ENCODE measurements at regions of chr22 and their contacts with region 1.

Region 1: GRCh38 chr22:36277482-36278291 is 24.8 kb downstream of the APOL1 start:
- DNase-seq: peak; percentile 84
- ATAC-seq: peak; percentile 79
- H3K4me3 Mint-ChIP-seq: no peak overlapping the region
- H3K27ac Mint-ChIP-seq: peak overlapping the region; percentile 69
- H3K4me1 Mint-ChIP-seq: peaks cover 35% of the 10 kb centered on the region
- H3K27me3 Mint-ChIP-seq: no peaks in the 10 kb centered on the region

Region 2: GRCh38 chr22:36123673-36124630 is 153.7 kb before region 1 on chr22:
- CTCF ChIA-PET with region 1: no interaction called
- DNase-seq: peak; percentile 95
- ATAC-seq: peak; percentile 99
- H3K4me3 Mint-ChIP-seq: peak overlapping the region; percentile 56
- H3K27ac Mint-ChIP-seq: peak overlapping the region; percentile 79
- H3K4me1 Mint-ChIP-seq: peaks cover 15% of the 10 kb centered on the region
- H3K27me3 Mint-ChIP-seq: peaks cover 2% of the 10 kb centered on the region

Region 3: GRCh38 chr22:36156515-36157419 is 120.9 kb before region 1 on chr22:
- CTCF ChIA-PET with region 1: no interaction called
- DNase-seq: peak; percentile 77
- ATAC-seq: peak; percentile 52
- H3K4me3 Mint-ChIP-seq: peak overlapping the region; percentile 98
- H3K27ac Mint-ChIP-seq: peak overlapping the region; percentile 93
- H3K4me1 Mint-ChIP-seq: peaks cover 83% of the 10 kb centered on the region
- H3K27me3 Mint-ChIP-seq: no peaks in the 10 kb centered on the region

Region 4: GRCh38 chr22:36194971-36195370 is 82.7 kb before region 1 on chr22:
- CTCF ChIA-PET with region 1: interaction called, 26 read pairs
- DNase-seq: peak; percentile 75
- ATAC-seq: peak; percentile 65
- H3K4me3 Mint-ChIP-seq: no peak overlapping the region
- H3K27ac Mint-ChIP-seq: no peak overlapping the region
- H3K4me1 Mint-ChIP-seq: peaks cover 47% of the 10 kb centered on the region
- H3K27me3 Mint-ChIP-seq: peaks cover 2% of the 10 kb centered on the region

Region 5: DNA sequence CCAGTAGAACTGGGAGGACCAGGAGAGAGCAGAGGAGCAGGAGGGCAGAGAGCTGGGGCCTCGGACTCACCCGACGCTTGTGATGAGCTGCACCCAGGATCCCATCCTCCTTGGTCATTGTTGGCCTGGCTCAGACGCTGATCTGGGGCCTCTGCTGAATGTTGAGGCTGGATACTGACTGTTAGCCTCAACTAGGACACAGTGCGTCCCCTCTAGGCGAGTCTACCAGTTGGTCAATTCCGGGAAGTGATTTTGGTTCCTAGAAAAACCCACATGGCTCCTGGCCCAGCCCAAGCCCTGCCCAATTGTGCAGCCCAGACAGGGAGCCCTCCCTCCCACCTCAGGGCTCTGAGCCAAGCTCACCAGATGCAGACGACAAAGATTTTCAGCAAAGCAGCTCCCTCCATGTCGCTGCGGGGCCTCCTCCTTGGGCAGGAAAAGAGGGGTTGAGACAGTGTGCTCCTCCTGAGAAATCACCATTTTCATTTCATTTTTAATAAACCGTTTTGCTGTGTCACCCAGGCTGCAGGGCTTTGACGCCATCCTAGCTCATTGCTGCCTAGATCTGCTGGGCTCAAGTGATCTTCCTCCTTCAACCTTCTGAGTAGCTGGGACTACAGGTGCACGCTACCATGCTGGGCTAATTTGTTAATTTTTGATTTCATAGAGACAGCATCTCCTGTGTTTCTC is 75.9 kb before region 1 on chr22 and contains the start of gene APOL4:
- CTCF ChIA-PET with region 1: interaction called, 26 read pairs
- DNase-seq: peak; percentile 73
- ATAC-seq: peak; percentile 52
- H3K4me3 Mint-ChIP-seq: peak within 1 kb of the TSS; percentile 74
- H3K27ac Mint-ChIP-seq: peak within 1 kb of the TSS; percentile 74
- H3K4me1 Mint-ChIP-seq: peaks cover 65% of the 10 kb centered on the region
- H3K27me3 Mint-ChIP-seq: no peaks in the 10 kb centered on the region
- total RNA-seq, gene APOL4: 17.0 to 22.6 TPM

Region 6: GRCh38 chr22:36311386-36312358 is 34.0 kb after region 1 on chr22:
- CTCF ChIA-PET with region 1: no interaction called
- DNase-seq: no peak
- ATAC-seq: no peak
- H3K4me3 Mint-ChIP-seq: no peak overlapping the region
- H3K27ac Mint-ChIP-seq: no peak overlapping the region
- H3K4me1 Mint-ChIP-seq: peaks cover 5% of the 10 kb centered on the region
- H3K27me3 Mint-ChIP-seq: no peaks in the 10 kb centered on the region

Region 7: DNA sequence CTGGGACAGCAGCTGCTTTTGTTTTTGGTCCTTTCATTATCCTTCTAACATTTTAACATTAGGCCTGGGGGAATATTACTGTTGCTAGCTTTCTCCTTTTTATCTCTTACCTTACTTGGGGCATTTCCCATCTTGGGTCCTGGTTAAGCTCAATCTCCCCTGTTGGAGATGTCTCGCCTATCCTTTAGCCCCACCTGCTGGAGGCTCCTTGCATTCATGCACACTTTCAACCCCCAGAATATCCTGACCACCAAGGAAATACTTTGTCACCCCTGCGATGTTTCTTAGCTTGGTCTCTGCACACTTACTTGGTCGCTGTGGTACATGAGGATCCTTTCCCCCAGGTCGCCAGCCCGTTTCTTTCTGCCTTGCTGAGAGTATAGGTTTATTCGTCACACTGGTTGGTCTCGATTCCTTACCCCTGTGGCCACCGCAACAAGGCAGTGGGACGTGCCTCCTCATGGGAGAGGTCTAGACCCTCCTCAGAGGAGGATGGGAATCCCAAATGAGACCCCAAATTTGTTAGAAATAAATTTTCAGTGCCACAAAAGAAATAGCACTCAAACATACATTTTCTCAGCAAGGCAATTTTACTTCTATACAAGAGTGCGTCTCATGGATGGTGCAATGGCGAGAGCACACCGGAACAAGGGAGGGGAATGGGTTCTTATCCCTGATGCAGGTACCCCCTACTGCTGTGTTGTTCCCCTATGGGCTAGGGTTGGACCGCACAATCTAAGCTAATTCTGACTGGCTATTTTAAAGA is 209.1 kb after region 1 on chr22:
- CTCF ChIA-PET with region 1: interaction called, 13 read pairs
- DNase-seq: peak; percentile 73
- ATAC-seq: no peak
- H3K4me3 Mint-ChIP-seq: no peak overlapping the region
- H3K27ac Mint-ChIP-seq: no peak overlapping the region
- H3K4me1 Mint-ChIP-seq: peaks cover 11% of the 10 kb centered on the region
- H3K27me3 Mint-ChIP-seq: no peaks in the 10 kb centered on the region

Measured in activated CD8-positive, alpha-beta memory T cell treated with anti-CD3 and anti-CD28 coated beads, Interleukin-2, amount 10 ng/mL, durations not matched to agents 7 days and 5 days (primary cell).